Cardiac septum (tissue), 1 donor: ENCODE measurements at regions of chr4 and their contacts with region 1.

Region 1: DNA sequence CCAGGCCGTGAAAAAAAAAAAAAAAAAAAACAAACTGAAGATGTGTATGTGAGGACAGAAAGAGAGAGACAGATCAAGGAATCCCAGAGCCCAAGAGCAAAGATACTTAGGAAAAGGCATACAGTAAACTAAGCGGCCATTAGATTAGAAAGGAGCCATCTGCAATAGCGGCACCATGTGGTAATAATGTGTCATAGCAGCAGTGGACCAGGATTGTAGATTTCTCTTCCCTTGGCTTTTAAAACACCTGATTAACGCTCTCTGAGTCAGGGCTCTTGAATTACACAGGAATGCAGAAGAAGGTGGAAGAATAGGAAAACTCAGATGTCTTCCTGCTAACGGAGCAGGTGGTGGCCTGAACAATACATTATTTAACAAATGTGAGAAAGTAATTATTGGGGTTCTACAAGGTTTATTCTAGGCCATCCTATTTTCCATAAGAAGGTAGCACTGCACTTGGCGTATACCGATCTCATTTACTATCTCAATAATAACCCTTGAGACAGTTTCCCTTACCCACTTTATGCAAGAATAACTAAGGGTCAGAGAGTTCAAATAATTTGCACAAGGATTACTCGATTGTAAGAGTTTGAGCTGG is 182.7 kb downstream of the KCNIP4 start:
- DNase-seq: no peak

Region 2: DNA sequence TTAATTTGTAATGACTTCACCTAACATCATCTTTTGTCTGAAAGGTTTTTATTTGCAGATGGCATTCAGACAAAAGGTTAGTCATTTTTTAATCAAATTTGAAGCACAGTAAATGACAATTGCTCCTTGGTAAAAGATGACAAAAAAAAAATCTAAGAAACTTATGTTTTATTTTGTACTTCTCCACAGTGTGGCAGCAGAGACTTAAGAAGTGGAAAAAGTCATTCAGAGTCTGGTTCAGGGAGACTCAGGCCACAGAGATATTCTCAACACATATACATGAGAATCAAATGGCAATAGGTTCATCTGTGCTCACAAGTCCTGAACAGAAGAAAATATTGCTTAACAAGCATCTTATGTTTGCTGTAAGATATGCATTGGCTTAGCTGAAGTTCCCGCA is 253.6 kb before region 1 on chr4:
- intact Hi-C with region 1: loop called (anchors 2 kb)
- DNase-seq: no peak

Region 3: GRCh38 chr4:21790438-21791029 is 24.6 kb after region 1 on chr4:
- intact Hi-C with region 1: no loop called
- DNase-seq: no peak